WTC11 (cell line): ENCODE measurements at regions of chr6 and their contacts with region 1.

Region 1: GRCh38 chr6:28769626-28770402 is 154.0 kb downstream of the TRIM27 start:
- DNase-seq: peak; percentile 63
- ATAC-seq: peak; percentile 5
- H3K4me3 Mint-ChIP-seq: peak overlapping the region; percentile 57
- H3K27ac Mint-ChIP-seq: no peak overlapping the region
- H3K4me1 Mint-ChIP-seq: peaks cover 95% of the 10 kb centered on the region
- H3K27me3 Mint-ChIP-seq: peaks cover 100% of the 10 kb centered on the region
- CTCF ChIP-seq: no peak

Region 2: DNA sequence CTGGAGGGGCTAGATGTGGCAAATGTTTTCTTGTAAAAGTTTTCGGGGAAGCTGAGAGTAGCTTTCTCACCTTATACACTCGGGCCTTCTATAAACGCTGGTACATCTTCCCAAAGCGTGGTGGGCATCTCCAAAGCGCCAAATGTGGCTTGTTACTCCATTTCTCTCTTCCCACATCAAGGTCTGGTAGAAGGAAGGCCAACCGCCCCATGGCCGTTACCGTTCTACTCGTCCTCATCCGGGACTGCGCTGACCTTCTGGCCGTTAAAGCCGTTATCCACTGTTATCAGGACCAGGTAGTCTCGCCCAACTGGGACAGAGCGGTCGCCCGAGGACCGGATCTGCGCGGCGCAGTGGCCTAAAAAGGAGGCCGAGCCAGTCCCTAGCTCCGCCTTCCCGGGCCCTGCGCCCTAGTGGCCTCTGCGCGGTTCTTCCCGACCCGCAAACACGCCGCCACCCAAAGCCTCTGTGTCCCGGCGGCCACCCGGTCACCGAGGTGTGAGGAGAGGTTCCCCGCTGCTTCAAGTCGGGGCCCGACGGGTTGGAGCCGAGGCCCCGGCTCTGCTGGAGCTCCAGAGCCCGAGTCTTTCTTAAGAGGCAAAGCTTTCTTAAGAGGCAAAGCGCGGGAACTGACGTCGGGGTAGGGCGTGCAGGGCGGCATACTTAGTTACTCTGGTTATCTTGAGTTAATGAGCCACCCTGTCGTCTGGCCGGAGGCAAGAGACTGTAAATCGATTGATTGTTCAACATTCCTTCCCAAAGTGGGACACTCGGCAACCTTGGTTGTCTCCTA is 153.7 kb before region 1 on chr6:
- CTCF ChIA-PET with region 1: no interaction called
- POLR2A ChIA-PET with region 1: no interaction called
- DNase-seq: peak; percentile 71
- ATAC-seq: peak; percentile 97
- H3K4me3 Mint-ChIP-seq: peak overlapping the region; percentile 69
- H3K27ac Mint-ChIP-seq: no peak overlapping the region
- H3K4me1 Mint-ChIP-seq: peaks cover 20% of the 10 kb centered on the region
- H3K27me3 Mint-ChIP-seq: peaks cover 37% of the 10 kb centered on the region
- CTCF ChIP-seq: no peak

Region 3: GRCh38 chr6:28809947-28810658 is 40.3 kb after region 1 on chr6:
- CTCF ChIA-PET with region 1: interaction called, 15 read pairs
- POLR2A ChIA-PET with region 1: interaction called, 4 read pairs
- DNase-seq: no peak
- ATAC-seq: peak; percentile 29
- H3K4me3 Mint-ChIP-seq: peak overlapping the region; percentile 81
- H3K27ac Mint-ChIP-seq: no peak overlapping the region
- H3K4me1 Mint-ChIP-seq: peaks cover 49% of the 10 kb centered on the region
- H3K27me3 Mint-ChIP-seq: peaks cover 93% of the 10 kb centered on the region
- CTCF ChIP-seq: no peak

Region 4: GRCh38 chr6:28824793-28825731 is 55.2 kb after region 1 on chr6:
- CTCF ChIA-PET with region 1: interaction called, 10 read pairs
- POLR2A ChIA-PET with region 1: no interaction called
- DNase-seq: no peak
- ATAC-seq: peak; percentile 80
- H3K4me3 Mint-ChIP-seq: peak overlapping the region; percentile 81
- H3K27ac Mint-ChIP-seq: no peak overlapping the region
- H3K4me1 Mint-ChIP-seq: peaks cover 16% of the 10 kb centered on the region
- H3K27me3 Mint-ChIP-seq: peaks cover 94% of the 10 kb centered on the region
- CTCF ChIP-seq: no peak